ENCODE measurements at regions of chr16 and their contacts with region 1.

Region 1: GRCh38 chr16:29815793-29816693 is at the start of gene PAGR1:
- DNase-seq: peak; percentile 99
- H3K4me3 Mint-ChIP-seq: peak within 1 kb of the TSS; percentile 84
- H3K27ac Mint-ChIP-seq: peak within 1 kb of the TSS; percentile 94
- H3K4me1 Mint-ChIP-seq: peaks cover 75% of the 10 kb centered on the region
- H3K27me3 Mint-ChIP-seq: peaks cover 43% of the 10 kb centered on the region

Region 2: GRCh38 chr16:29805378-29806098 is 10.5 kb before region 1 on chr16:
- CTCF ChIA-PET with region 1: interaction called, 59 read pairs
- DNase-seq: peak; percentile 99
- H3K4me3 Mint-ChIP-seq: peak overlapping the region; percentile 100
- H3K27ac Mint-ChIP-seq: peak overlapping the region; percentile 100
- H3K4me1 Mint-ChIP-seq: peaks cover 52% of the 10 kb centered on the region
- H3K27me3 Mint-ChIP-seq: peaks cover 6% of the 10 kb centered on the region